Tibial artery (tissue), 4 donors: ENCODE measurements at regions of chr15 and their contacts with region 1.

Region 1: GRCh38 chr15:68304589-68305337 is 27.2 kb downstream of the FEM1B start:
- DNase-seq: peak; percentile 15 to 65
- H3K4me3 ChIP-seq: no peak overlapping the region
- H3K27ac ChIP-seq: peak overlapping the region in 1 of 2 donors; percentile 43
- H3K4me1 ChIP-seq: peaks cover 0 to 46% (median 17%) of the 10 kb centered on the region in 4 donors
- H3K27me3 ChIP-seq: no peaks in the 10 kb centered on the region
- CTCF ChIP-seq: no peak

Region 2: DNA sequence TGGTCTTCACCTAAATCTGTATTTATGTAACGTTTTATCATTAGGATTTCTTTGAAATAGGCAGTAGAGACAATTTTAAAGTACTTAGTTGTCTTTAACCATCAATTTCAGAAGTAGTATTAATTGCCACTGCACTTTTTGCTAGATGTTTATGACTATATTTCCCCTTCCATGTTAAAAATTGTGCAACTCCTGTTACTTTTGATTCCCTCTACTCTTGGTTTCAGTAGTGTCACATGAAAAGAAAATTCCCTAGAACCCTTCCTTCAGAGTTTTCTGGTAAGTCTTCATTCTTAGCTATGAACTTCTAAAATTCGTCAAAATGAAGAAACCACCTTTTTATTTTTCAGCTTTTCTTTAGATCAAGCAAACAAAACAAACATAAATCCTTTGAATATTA is 243.6 kb before region 1 on chr15:
- intact Hi-C with region 1: no loop called
- DNase-seq: no peak
- H3K4me3 ChIP-seq: no peak overlapping the region
- H3K27ac ChIP-seq: no peak overlapping the region
- H3K4me1 ChIP-seq: peaks cover 0 to 63% (median 17%) of the 10 kb centered on the region in 4 donors
- H3K27me3 ChIP-seq: no peaks in the 10 kb centered on the region
- CTCF ChIP-seq: no peak

Region 3: GRCh38 chr15:68252925-68253534 is 51.7 kb before region 1 on chr15:
- intact Hi-C with region 1: loop called (anchors 5 kb)
- DNase-seq: peak in 1 of 2 donors; percentile 44
- H3K4me3 ChIP-seq: no peak overlapping the region
- H3K27ac ChIP-seq: no peak overlapping the region
- H3K4me1 ChIP-seq: peaks cover 0 to 16% (median 12%) of the 10 kb centered on the region in 4 donors
- H3K27me3 ChIP-seq: no peaks in the 10 kb centered on the region
- CTCF ChIP-seq: peak; percentile 91 to 93

Region 4: GRCh38 chr15:68365140-68365745 is 60.5 kb after region 1 on chr15:
- intact Hi-C with region 1: loop called (anchors 5 kb)
- DNase-seq: no peak
- H3K4me3 ChIP-seq: no peak overlapping the region
- H3K27ac ChIP-seq: peak overlapping the region; percentile 82 to 90
- H3K4me1 ChIP-seq: peaks cover 0 to 87% (median 74%) of the 10 kb centered on the region in 4 donors
- H3K27me3 ChIP-seq: no peaks in the 10 kb centered on the region
- CTCF ChIP-seq: no peak

Region 5: GRCh38 chr15:68559345-68560310 is 254.9 kb after region 1 on chr15:
- intact Hi-C with region 1: loop called (anchors 10 kb)
- DNase-seq: peak; percentile 60 to 87
- H3K4me3 ChIP-seq: peak overlapping the region; percentile 43 to 56
- H3K27ac ChIP-seq: peak overlapping the region in 1 of 2 donors; percentile 0
- H3K4me1 ChIP-seq: peaks cover 0 to 14% (median 9%) of the 10 kb centered on the region in 4 donors
- H3K27me3 ChIP-seq: peaks cover 0 to 19% of the 10 kb centered on the region in 2 donors
- CTCF ChIP-seq: peak; percentile 96

Region 6: GRCh38 chr15:68672781-68673205 is 368.0 kb after region 1 on chr15:
- intact Hi-C with region 1: loop called (anchors 5 kb)
- DNase-seq: peak in 1 of 2 donors; percentile 60
- H3K4me3 ChIP-seq: no peak overlapping the region
- H3K27ac ChIP-seq: no peak overlapping the region
- H3K4me1 ChIP-seq: no peaks in the 10 kb centered on the region
- H3K27me3 ChIP-seq: peaks cover 0 to 6% of the 10 kb centered on the region in 2 donors
- CTCF ChIP-seq: no peak